ENCODE measurements at regions of chr13 and their contacts with region 1.

Region 1: GRCh38 chr13:32164622-32165268 is 133.2 kb downstream of the FRY start:
- DNase-seq: peak; percentile 10 to 58
- H3K4me3 ChIP-seq: no peak overlapping the region
- H3K27ac ChIP-seq: no peak overlapping the region
- H3K4me1 ChIP-seq: no peaks in the 10 kb centered on the region
- H3K27me3 ChIP-seq: no peaks in the 10 kb centered on the region
- CTCF ChIP-seq: peak; percentile 35 to 90 (median 81)
- EP300 ChIP-seq: no peak
- POLR2A ChIP-seq: no peak
- RAD21 ChIP-seq: peak; percentile 59 to 72

Region 2: GRCh38 chr13:31909864-31910551 is 254.7 kb before region 1 on chr13:
- CTCF ChIA-PET with region 1: interaction called, 21 read pairs
- POLR2A ChIA-PET with region 1: no interaction called
- DNase-seq: no peak
- H3K4me3 ChIP-seq: no peak overlapping the region
- H3K27ac ChIP-seq: no peak overlapping the region
- H3K4me1 ChIP-seq: peaks cover 0 to 3% (median 1%) of the 10 kb centered on the region in 4 experiments; a peak in 1 of 7 replicates
- H3K27me3 ChIP-seq: peaks cover 0 to 1% (median 0%) of the 10 kb centered on the region in 4 experiments; a peak in 1 of 7 replicates
- CTCF ChIP-seq: peak in 2 of 3 experiments; percentile 65 to 75; a peak in 3 of 4 replicates
- EP300 ChIP-seq: no peak
- POLR2A ChIP-seq: no peak
- RAD21 ChIP-seq: peak; percentile 83 to 87

Region 3: GRCh38 chr13:32017474-32017873 is 147.3 kb before region 1 on chr13:
- CTCF ChIA-PET with region 1: interaction called, 10 read pairs
- POLR2A ChIA-PET with region 1: no interaction called
- DNase-seq: no peak
- H3K4me3 ChIP-seq: no peak overlapping the region
- H3K27ac ChIP-seq: no peak overlapping the region
- H3K4me1 ChIP-seq: peaks cover 0 to 6% (median 2%) of the 10 kb centered on the region in 4 experiments; a peak in 2 of 7 replicates
- H3K27me3 ChIP-seq: no peaks in the 10 kb centered on the region
- CTCF ChIP-seq: no peak
- EP300 ChIP-seq: no peak
- POLR2A ChIP-seq: no peak
- RAD21 ChIP-seq: no peak

Region 4: GRCh38 chr13:32045982-32046785 is 118.6 kb before region 1 on chr13:
- CTCF ChIA-PET with region 1: interaction called, 11 read pairs
- POLR2A ChIA-PET with region 1: no interaction called
- DNase-seq: no peak
- H3K4me3 ChIP-seq: no peak overlapping the region
- H3K27ac ChIP-seq: no peak overlapping the region
- H3K4me1 ChIP-seq: peaks cover 0 to 9% (median 3%) of the 10 kb centered on the region in 4 experiments; a peak in 3 of 7 replicates
- H3K27me3 ChIP-seq: no peaks in the 10 kb centered on the region
- CTCF ChIP-seq: no peak
- EP300 ChIP-seq: no peak
- POLR2A ChIP-seq: no peak
- RAD21 ChIP-seq: no peak

Region 5: GRCh38 chr13:32139251-32139650 is 25.5 kb before region 1 on chr13:
- CTCF ChIA-PET with region 1: no interaction called
- POLR2A ChIA-PET with region 1: no interaction called
- DNase-seq: no peak
- H3K4me3 ChIP-seq: no peak overlapping the region
- H3K27ac ChIP-seq: no peak overlapping the region
- H3K4me1 ChIP-seq: peaks cover 0 to 12% (median 1%) of the 10 kb centered on the region in 4 experiments; a peak in 2 of 7 replicates
- H3K27me3 ChIP-seq: no peaks in the 10 kb centered on the region
- CTCF ChIP-seq: no peak
- EP300 ChIP-seq: no peak
- POLR2A ChIP-seq: no peak
- RAD21 ChIP-seq: no peak

Region 6: DNA sequence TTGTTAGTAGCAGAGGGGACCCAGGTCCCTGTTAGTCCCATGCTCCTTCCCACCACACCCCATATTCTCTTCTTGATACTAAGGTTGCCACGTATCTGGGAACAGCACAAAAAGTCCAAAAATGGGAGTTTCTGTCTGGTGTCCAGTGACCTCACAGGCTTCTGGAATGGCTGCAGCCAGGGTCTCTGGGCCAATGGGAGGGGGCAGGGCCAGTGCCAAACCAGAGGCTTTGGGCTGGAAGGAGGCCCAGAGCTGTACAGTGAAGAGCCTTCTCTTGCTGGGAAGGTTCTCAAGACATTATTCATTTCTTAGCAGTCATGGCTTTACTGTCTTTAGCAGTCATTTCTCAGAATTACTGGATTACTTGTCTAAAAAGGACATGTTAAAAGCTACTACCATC is 14.0 kb before region 1 on chr13:
- CTCF ChIA-PET with region 1: interaction called, 12 read pairs
- POLR2A ChIA-PET with region 1: no interaction called
- DNase-seq: no peak
- H3K4me3 ChIP-seq: no peak overlapping the region
- H3K27ac ChIP-seq: no peak overlapping the region
- H3K4me1 ChIP-seq: no peaks in the 10 kb centered on the region
- H3K27me3 ChIP-seq: no peaks in the 10 kb centered on the region
- CTCF ChIP-seq: no peak
- EP300 ChIP-seq: no peak
- POLR2A ChIP-seq: no peak
- RAD21 ChIP-seq: no peak

Region 7: DNA sequence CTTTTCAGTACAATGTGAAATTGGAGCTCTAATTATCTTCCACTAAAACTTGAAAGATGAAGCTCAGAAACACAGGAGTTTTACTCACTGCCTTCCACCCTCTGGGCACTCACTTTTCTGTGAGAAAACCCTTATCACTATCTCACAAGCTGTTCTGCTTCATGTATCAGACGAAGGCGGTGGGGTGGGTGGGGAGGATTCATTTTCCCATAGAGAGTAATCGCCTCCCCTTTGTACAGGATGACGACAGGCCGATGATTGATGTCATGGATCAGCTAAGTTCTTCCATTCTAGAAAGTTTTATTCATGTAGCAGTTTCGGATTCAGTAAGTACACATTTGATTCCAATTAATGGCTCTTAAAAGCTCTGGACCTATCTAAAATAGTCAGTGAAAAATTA is 10.6 kb after region 1 on chr13:
- CTCF ChIA-PET with region 1: interaction called, 41 read pairs
- POLR2A ChIA-PET with region 1: interaction called, 3 read pairs
- DNase-seq: no peak
- H3K4me3 ChIP-seq: no peak overlapping the region
- H3K27ac ChIP-seq: no peak overlapping the region
- H3K4me1 ChIP-seq: no peaks in the 10 kb centered on the region
- H3K27me3 ChIP-seq: no peaks in the 10 kb centered on the region
- CTCF ChIP-seq: no peak
- EP300 ChIP-seq: no peak
- POLR2A ChIP-seq: no peak
- RAD21 ChIP-seq: no peak

Region 8: GRCh38 chr13:32187651-32188050 is 22.9 kb after region 1 on chr13:
- CTCF ChIA-PET with region 1: interaction called, 10 read pairs
- POLR2A ChIA-PET with region 1: no interaction called
- DNase-seq: no peak
- H3K4me3 ChIP-seq: no peak overlapping the region
- H3K27ac ChIP-seq: no peak overlapping the region
- H3K4me1 ChIP-seq: 0 out of 7 replicates have a peak, but pooled peaks cover 0 to 2% (median 0%) of the 10 kb centered on the region in 4 experiments
- H3K27me3 ChIP-seq: no peaks in the 10 kb centered on the region
- CTCF ChIP-seq: no peak
- EP300 ChIP-seq: no peak
- POLR2A ChIP-seq: no peak
- RAD21 ChIP-seq: no peak